HepG2 (cell line): ENCODE measurements at regions of chr2 and their contacts with region 1.

Region 1: GRCh38 chr2:39135690-39136259 is 14.9 kb upstream of the SOS1 start:
- DNase-seq: no peak
- ATAC-seq: no peak
- H3K4me3 ChIP-seq: no peak overlapping the region
- H3K27ac ChIP-seq: peak overlapping the region; percentile 25
- H3K4me1 ChIP-seq: peaks cover 64% of the 10 kb centered on the region
- H3K27me3 ChIP-seq: no peaks in the 10 kb centered on the region
- CTCF ChIP-seq: no peak
- EP300 ChIP-seq: no peak
- POLR2A ChIP-seq: no peak
- RAD21 ChIP-seq: no peak

Region 2: DNA sequence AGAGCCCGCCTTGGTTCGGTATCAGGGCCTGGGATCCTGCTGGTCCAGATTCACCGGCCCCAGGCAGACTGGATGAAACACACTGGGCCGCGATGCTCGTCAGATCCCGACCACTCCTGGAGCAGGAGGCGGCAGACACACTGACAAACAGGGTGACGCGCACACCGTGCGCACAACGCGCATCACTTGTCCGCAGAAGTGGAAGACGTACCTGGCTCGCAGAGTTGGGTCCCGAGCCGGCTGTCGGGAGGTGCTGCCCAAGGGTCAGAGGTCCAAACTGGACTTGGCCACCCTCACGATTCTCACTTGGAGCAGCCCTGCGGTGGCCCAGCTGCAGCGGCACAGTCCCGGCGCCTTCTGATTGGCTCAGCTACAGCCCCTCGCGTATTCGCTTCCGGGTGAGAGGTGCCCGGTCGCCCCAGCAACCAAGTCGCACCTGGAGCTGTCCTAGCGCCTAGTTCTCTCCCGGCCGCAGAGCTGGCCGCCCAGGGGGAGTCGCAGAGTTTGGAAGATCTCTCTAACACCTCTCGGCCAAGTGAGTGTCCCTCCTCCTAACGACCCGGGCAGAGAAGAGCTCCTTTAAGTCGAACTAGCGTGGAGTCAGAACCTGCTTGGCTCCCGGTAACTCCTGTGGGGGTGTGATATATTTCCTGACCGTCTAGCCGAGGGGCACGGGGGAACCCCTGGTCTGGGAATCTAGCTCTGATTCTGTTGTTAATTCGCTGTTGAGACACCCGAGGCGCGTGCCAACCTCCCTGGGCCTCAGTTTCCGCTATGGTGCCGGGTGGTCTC is 260.0 kb before region 1 on chr2 and contains the starts of genes DHX57 and MORN2:
- CTCF ChIA-PET with region 1: no interaction called
- POLR2A ChIA-PET with region 1: no interaction called
- in situ Hi-C with region 1: no loop called
- intact Hi-C with region 1: loop called (anchors 10 kb)
- DNase-seq: peak; percentile 87
- ATAC-seq: peak; percentile 99
- H3K4me3 ChIP-seq: peak within 1 kb of the TSS; percentile 58 to 97 (median 81)
- H3K27ac ChIP-seq: peak within 1 kb of the TSS; percentile 54
- H3K4me1 ChIP-seq: peaks cover 28% of the 10 kb centered on the region
- H3K27me3 ChIP-seq: no peaks in the 10 kb centered on the region; a peak in 1 of 5 replicates
- CTCF ChIP-seq: peak; percentile 14; the same call in 1 of the 2 replicates
- EP300 ChIP-seq: peak in 1 of 2 experiments; percentile 53; a peak in 1 of 4 replicates
- POLR2A ChIP-seq: peak; percentile 75 to 88
- RAD21 ChIP-seq: peak; percentile 48; the same call in 1 of the 2 replicates
- total RNA-seq, gene DHX57: 24.2 and 33.3 TPM in 2 replicates
- total RNA-seq, gene MORN2: 28.0 and 38.6 TPM in 2 replicates

Region 3: GRCh38 chr2:39179974-39180970 is 44.5 kb after region 1 on chr2:
- CTCF ChIA-PET with region 1: no interaction called
- POLR2A ChIA-PET with region 1: no interaction called
- in situ Hi-C with region 1: no loop called
- intact Hi-C with region 1: loop called (anchors 2 kb)
- DNase-seq: no peak
- ATAC-seq: no peak; the same call in 1 of the 3 replicates
- H3K4me3 ChIP-seq: no peak overlapping the region
- H3K27ac ChIP-seq: no peak overlapping the region
- H3K4me1 ChIP-seq: peaks cover 18% of the 10 kb centered on the region
- H3K27me3 ChIP-seq: no peaks in the 10 kb centered on the region
- CTCF ChIP-seq: no peak
- EP300 ChIP-seq: no peak
- POLR2A ChIP-seq: no peak
- RAD21 ChIP-seq: no peak